PC-3 (cell line): ENCODE measurements at regions of chr6 and their contacts with region 1.

Region 1: DNA sequence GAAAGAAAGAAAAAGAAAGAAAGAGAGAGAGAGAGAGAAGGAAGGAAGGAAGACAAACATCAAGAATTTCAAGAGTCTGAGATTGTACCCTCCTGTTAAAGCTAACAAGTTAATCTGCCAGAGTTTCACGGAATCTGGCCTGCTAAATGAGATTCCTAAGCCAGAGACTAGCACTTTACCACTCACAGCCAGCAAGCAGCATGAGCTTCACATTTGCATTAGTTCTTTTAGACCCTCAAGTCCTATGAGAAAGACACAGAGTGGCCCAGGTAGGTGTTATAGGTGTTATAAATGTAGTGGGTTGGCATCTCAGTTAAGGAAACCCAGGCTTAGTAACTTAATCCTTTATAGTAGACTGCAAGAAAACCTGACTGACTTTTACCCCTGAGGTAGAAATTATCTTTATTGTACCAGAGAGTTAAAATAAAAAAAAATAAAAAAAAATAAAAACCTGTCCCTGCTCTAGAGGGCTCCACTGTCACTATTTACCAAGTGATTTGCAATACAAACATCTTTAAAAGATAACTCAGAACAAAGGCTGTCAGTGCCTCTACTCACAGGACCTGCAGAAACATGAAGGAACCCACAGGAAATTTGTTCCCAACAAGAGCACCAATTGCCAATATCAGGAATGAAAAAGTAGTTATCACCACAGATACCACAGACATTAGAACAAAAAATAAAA is 9.7 kb upstream of the IBTK start:
- DNase-seq: peak; percentile 31
- ATAC-seq: peak; percentile 65
- H3K4me3 ChIP-seq: no peak overlapping the region
- H3K27ac ChIP-seq: no peak overlapping the region
- H3K4me1 ChIP-seq: peaks cover 28% of the 10 kb centered on the region
- H3K27me3 ChIP-seq: no peaks in the 10 kb centered on the region
- CTCF ChIP-seq: peak; percentile 50

Region 2: GRCh38 chr6:82353848-82354247 is 96.6 kb after region 1 on chr6:
- CTCF ChIA-PET with region 1: no interaction called
- POLR2A ChIA-PET with region 1: no interaction called
- intact Hi-C with region 1: loop called (anchors 5 kb)
- DNase-seq: no peak
- ATAC-seq: no peak; the same call in 1 of the 2 replicates
- H3K4me3 ChIP-seq: no peak overlapping the region
- H3K27ac ChIP-seq: no peak overlapping the region
- H3K4me1 ChIP-seq: peaks cover 15% of the 10 kb centered on the region
- H3K27me3 ChIP-seq: no peaks in the 10 kb centered on the region
- CTCF ChIP-seq: no peak

Region 3: GRCh38 chr6:82646214-82646580 is 389.0 kb after region 1 on chr6:
- CTCF ChIA-PET with region 1: no interaction called
- POLR2A ChIA-PET with region 1: no interaction called
- intact Hi-C with region 1: no loop called
- DNase-seq: peak; percentile 78
- ATAC-seq: peak; percentile 92
- H3K4me3 ChIP-seq: 0 out of 2 replicates have a peak overlapping the region, but pooled peaks have one; percentile 5
- H3K27ac ChIP-seq: peak overlapping the region; percentile 93
- H3K4me1 ChIP-seq: peaks cover 25% of the 10 kb centered on the region
- H3K27me3 ChIP-seq: no peaks in the 10 kb centered on the region
- CTCF ChIP-seq: no peak